Gastrocnemius medialis (tissue), 4 donors: ENCODE measurements at regions of chr14 and their contacts with region 1.

Region 1: GRCh38 chr14:22472935-22473854 is 115.8 kb downstream of the DAD1 start:
- DNase-seq: no peak
- ATAC-seq: no peak
- H3K4me3 ChIP-seq: no peak overlapping the region
- H3K27ac ChIP-seq: no peak overlapping the region
- H3K4me1 ChIP-seq: no peaks in the 10 kb centered on the region
- H3K27me3 ChIP-seq: no peaks in the 10 kb centered on the region
- CTCF ChIP-seq: peak in 4 of 5 experiments; percentile 37 to 46 (median 43)
- POLR2A ChIP-seq: no peak

Region 2: GRCh38 chr14:22370084-22370847 is 102.9 kb before region 1 on chr14:
- in situ Hi-C with region 1: no loop called
- intact Hi-C with region 1: no loop called
- DNase-seq: no peak
- ATAC-seq: peak; percentile 65 to 69
- H3K4me3 ChIP-seq: no peak overlapping the region
- H3K27ac ChIP-seq: no peak overlapping the region
- H3K4me1 ChIP-seq: no peaks in the 10 kb centered on the region
- H3K27me3 ChIP-seq: no peaks in the 10 kb centered on the region
- CTCF ChIP-seq: no peak
- POLR2A ChIP-seq: no peak

Region 3: GRCh38 chr14:22386924-22387775 is 86.0 kb before region 1 on chr14:
- in situ Hi-C with region 1: loop called in 2 of 4 experiments (anchors 5 kb)
- intact Hi-C with region 1: loop called (anchors 2 kb)
- DNase-seq: peak; percentile 12 to 21
- ATAC-seq: peak in 1 of 2 donors; percentile 72
- H3K4me3 ChIP-seq: no peak overlapping the region
- H3K27ac ChIP-seq: no peak overlapping the region
- H3K4me1 ChIP-seq: no peaks in the 10 kb centered on the region
- H3K27me3 ChIP-seq: peaks cover 0 to 10% (median 0%) of the 10 kb centered on the region in 3 donors
- CTCF ChIP-seq: peak; percentile 29 to 77 (median 64)
- POLR2A ChIP-seq: no peak

Region 4: GRCh38 chr14:22397221-22397737 is 75.9 kb before region 1 on chr14:
- in situ Hi-C with region 1: loop called in 3 of 4 experiments (anchors 5 kb)
- intact Hi-C with region 1: no loop called
- DNase-seq: no peak
- ATAC-seq: no peak
- H3K4me3 ChIP-seq: no peak overlapping the region
- H3K27ac ChIP-seq: no peak overlapping the region
- H3K4me1 ChIP-seq: no peaks in the 10 kb centered on the region
- H3K27me3 ChIP-seq: no peaks in the 10 kb centered on the region
- CTCF ChIP-seq: no peak
- POLR2A ChIP-seq: no peak

Region 5: DNA sequence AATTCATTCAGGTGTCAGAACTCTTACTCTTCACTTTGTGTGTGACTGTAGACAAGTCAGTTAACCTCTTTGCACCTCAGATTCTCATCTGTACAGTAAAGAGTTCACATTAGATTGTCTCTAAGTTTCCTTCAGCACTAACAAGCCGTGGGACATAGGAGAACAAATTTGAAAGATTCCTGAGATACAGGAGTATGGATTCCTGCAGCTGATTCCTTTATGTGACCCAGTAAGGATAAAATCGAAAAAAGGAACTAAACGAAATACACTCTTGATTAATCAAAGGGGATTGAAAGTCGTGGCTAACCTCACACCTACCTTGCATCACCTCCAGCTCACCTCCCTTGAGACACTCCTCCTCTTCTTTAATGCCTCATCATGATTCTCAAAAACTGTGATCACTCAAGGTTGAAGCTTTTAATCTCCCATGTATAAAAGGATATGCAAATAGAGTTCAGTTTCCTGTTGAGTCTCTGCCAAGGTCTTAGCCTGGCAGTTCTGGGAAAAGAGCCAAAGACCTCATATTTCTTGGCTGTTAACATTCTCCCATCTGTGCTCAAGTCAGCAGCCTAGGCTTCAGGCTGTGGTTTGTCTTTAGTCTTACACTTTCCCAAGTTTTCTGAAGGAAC is 40.7 kb before region 1 on chr14:
- in situ Hi-C with region 1: no loop called
- intact Hi-C with region 1: no loop called
- DNase-seq: peak in 1 of 2 donors; percentile 16
- ATAC-seq: peak; percentile 82
- H3K4me3 ChIP-seq: no peak overlapping the region
- H3K27ac ChIP-seq: no peak overlapping the region
- H3K4me1 ChIP-seq: peaks cover 10 to 17% of the 10 kb centered on the region in 2 donors
- H3K27me3 ChIP-seq: no peaks in the 10 kb centered on the region
- CTCF ChIP-seq: no peak
- POLR2A ChIP-seq: no peak

Region 6: DNA sequence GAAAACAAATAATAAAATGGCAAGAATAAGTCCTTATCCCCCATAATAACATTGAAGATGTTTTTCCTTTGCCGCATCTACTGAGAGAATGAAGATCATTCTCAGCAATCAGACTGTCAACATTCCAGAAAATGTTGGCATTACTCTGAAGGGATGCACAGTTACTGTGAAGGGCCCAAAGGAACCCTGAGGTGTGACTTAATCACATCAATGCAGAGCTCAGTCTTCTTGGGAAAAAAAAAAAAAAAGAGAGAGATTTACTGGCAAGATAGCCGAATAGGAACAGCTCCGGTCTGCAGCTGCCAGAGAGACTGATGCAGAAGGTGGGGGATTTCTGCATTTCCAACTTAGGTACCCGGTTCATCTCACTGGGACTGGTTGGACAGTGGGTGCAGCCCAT is 212.3 kb after region 1 on chr14:
- in situ Hi-C with region 1: no loop called
- intact Hi-C with region 1: no loop called
- DNase-seq: no peak
- ATAC-seq: no peak
- H3K4me3 ChIP-seq: no peak overlapping the region
- H3K27ac ChIP-seq: no peak overlapping the region
- H3K4me1 ChIP-seq: no peaks in the 10 kb centered on the region
- H3K27me3 ChIP-seq: no peaks in the 10 kb centered on the region
- CTCF ChIP-seq: no peak
- POLR2A ChIP-seq: no peak

Region 7: GRCh38 chr14:23259426-23259825 is 786.2 kb after region 1 on chr14:
- in situ Hi-C with region 1: no loop called
- intact Hi-C with region 1: no loop called
- DNase-seq: no peak
- ATAC-seq: no peak
- H3K4me3 ChIP-seq: no peak overlapping the region
- H3K27ac ChIP-seq: no peak overlapping the region
- H3K4me1 ChIP-seq: no peaks in the 10 kb centered on the region
- H3K27me3 ChIP-seq: peaks cover 3 to 5% (median 5%) of the 10 kb centered on the region in 3 donors
- CTCF ChIP-seq: no peak
- POLR2A ChIP-seq: no peak